Stomach (tissue), 19 donors: ENCODE measurements at regions of chr18 and their contacts with region 1.

Region 1: GRCh38 chr18:32167975-32168730 is 21.7 kb upstream of the MEP1B start:
- DNase-seq: no peak
- H3K4me3 ChIP-seq: no peak overlapping the region
- H3K27ac ChIP-seq: no peak overlapping the region
- H3K4me1 ChIP-seq: no peaks in the 10 kb centered on the region
- H3K27me3 ChIP-seq: no peaks in the 10 kb centered on the region
- CTCF ChIP-seq: no peak
- EP300 ChIP-seq: no peak
- POLR2A ChIP-seq: no peak

Region 2: DNA sequence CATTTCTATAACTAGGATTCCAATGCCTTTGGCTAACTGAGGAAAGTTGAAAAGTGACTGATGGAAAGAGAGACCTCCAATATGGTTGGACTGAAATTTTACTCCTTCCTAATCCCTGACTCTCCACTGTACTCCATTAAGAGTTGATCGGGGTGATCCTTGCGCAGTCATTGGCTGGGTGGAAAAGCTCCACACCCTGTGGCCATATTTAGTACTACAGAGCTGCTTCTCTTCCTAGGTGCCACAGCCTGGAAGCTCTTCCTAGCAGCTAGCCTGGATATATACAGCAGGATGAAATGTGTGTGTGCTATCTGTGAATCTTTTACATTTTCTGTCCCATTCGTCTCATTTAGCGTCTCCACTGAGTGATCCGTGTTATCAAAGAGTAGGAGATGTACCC is 92.8 kb after region 1 on chr18:
- intact Hi-C with region 1: loop called (anchors 10 kb)
- DNase-seq: no peak
- H3K4me3 ChIP-seq: no peak overlapping the region
- H3K27ac ChIP-seq: no peak overlapping the region
- H3K4me1 ChIP-seq: no peaks in the 10 kb centered on the region
- H3K27me3 ChIP-seq: no peaks in the 10 kb centered on the region
- CTCF ChIP-seq: no peak
- EP300 ChIP-seq: no peak
- POLR2A ChIP-seq: no peak

Region 3: GRCh38 chr18:32470713-32471633 is 302.8 kb after region 1 on chr18 and contains the start of gene GAREM1:
- intact Hi-C with region 1: loop called (anchors 10 kb)
- DNase-seq: peak; percentile 96 to 99
- H3K4me3 ChIP-seq: peak within 1 kb of the TSS; percentile 71 to 92 (median 82)
- H3K27ac ChIP-seq: peak within 1 kb of the TSS; percentile 86 to 94 (median 93)
- H3K4me1 ChIP-seq: peaks cover 8 to 44% (median 28%) of the 10 kb centered on the region in 4 donors
- H3K27me3 ChIP-seq: no peaks in the 10 kb centered on the region
- CTCF ChIP-seq: peak in 5 of 7 experiments; percentile 42 to 84 (median 71)
- EP300 ChIP-seq: no peak
- POLR2A ChIP-seq: peak in 1 of 4 donors; percentile 67
- total RNA-seq, gene GAREM1: 5.2 to 60.3 (median 32.9) TPM